Ovary (tissue), 10 donors: ENCODE measurements at regions of chr12 and their contacts with region 1.

Region 1: DNA sequence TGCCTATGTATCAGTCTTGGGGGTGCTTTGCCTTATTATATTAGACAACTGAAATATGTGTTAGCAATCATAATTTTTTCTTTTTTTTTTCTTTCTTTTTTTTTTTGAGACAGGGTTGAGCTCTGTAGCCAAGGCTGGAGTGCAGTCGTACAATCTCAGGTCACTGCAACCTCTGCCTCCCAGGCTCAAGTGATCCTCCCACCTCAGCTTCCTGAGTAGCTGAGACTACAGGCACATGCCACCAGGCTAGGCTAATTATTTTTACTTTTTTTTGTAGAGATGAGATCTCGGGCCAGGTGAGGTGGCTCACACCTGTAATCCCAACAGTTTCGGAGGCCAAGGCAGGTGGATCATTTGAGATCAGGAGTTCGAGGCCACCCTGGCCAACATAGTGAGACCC is 33.2 kb downstream of the C12orf56 start:
- DNase-seq: no peak
- H3K4me3 ChIP-seq: no peak overlapping the region
- H3K27ac ChIP-seq: no peak overlapping the region
- H3K4me1 ChIP-seq: no peaks in the 10 kb centered on the region
- H3K27me3 ChIP-seq: no peaks in the 10 kb centered on the region
- CTCF ChIP-seq: no peak
- EP300 ChIP-seq: no peak
- POLR2A ChIP-seq: no peak

Region 2: GRCh38 chr12:62963486-62964041 is 1393.8 kb before region 1 on chr12:
- intact Hi-C with region 1: loop called in 1 of 4 experiments (anchors 5 kb)
- DNase-seq: no peak
- H3K4me3 ChIP-seq: no peak overlapping the region
- H3K27ac ChIP-seq: no peak overlapping the region
- H3K4me1 ChIP-seq: peaks cover 4% of the 10 kb centered on the region
- H3K27me3 ChIP-seq: no peaks in the 10 kb centered on the region
- CTCF ChIP-seq: no peak
- EP300 ChIP-seq: no peak
- POLR2A ChIP-seq: no peak

Region 3: GRCh38 chr12:64407342-64408223 is 50.3 kb after region 1 on chr12:
- intact Hi-C with region 1: no loop called
- DNase-seq: no peak
- H3K4me3 ChIP-seq: no peak overlapping the region
- H3K27ac ChIP-seq: no peak overlapping the region
- H3K4me1 ChIP-seq: peaks cover 2% of the 10 kb centered on the region
- H3K27me3 ChIP-seq: no peaks in the 10 kb centered on the region
- CTCF ChIP-seq: no peak
- EP300 ChIP-seq: no peak
- POLR2A ChIP-seq: no peak

Region 4: GRCh38 chr12:64431791-64432190 is 74.5 kb after region 1 on chr12:
- intact Hi-C with region 1: no loop called
- DNase-seq: no peak
- H3K4me3 ChIP-seq: no peak overlapping the region
- H3K27ac ChIP-seq: no peak overlapping the region
- H3K4me1 ChIP-seq: no peaks in the 10 kb centered on the region
- H3K27me3 ChIP-seq: no peaks in the 10 kb centered on the region
- CTCF ChIP-seq: no peak
- EP300 ChIP-seq: no peak
- POLR2A ChIP-seq: no peak